Activated T-helper 1 cell treated with anti-CD3 and anti-CD28 coated beads, Interleukin-12 subunit alpha, Interleukin-12 subunit beta, Interleukin-2, Interleukin-4 antibody, amounts not matched to agents 30 ng/mL and 10 ng/mL and 1 ng/mL, durations not matched to agents 14 hours and 24 hours and 36 hours (primary cell): ENCODE measurements at regions of chr10 and their contacts with region 1.

Region 1: DNA sequence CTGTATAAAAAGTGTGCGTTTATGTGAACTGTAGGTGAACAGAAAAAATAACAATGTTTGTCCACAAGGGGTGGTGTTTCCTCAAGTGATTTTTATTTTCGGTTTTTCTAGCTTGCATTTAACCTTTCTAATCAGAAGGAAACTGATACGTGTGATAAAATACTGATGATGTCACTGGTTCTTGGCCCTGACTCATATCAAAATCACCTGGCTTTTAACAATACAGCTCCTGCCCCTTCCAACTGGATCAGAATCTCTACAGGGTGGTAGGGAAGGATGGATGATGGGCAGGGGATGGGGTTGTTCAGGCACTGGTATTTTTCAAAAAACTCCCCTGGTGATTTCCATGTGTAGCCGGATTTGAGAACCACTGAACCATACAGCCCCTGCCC is 10.9 kb downstream of the NPFFR1 start:
- DNase-seq: no peak
- H3K4me3 Mint-ChIP-seq: peak overlapping the region; percentile 26
- H3K27ac Mint-ChIP-seq: peak overlapping the region; percentile 67
- H3K4me1 Mint-ChIP-seq: peaks cover 26% of the 10 kb centered on the region
- H3K27me3 Mint-ChIP-seq: peaks cover 10% of the 10 kb centered on the region

Region 2: DNA sequence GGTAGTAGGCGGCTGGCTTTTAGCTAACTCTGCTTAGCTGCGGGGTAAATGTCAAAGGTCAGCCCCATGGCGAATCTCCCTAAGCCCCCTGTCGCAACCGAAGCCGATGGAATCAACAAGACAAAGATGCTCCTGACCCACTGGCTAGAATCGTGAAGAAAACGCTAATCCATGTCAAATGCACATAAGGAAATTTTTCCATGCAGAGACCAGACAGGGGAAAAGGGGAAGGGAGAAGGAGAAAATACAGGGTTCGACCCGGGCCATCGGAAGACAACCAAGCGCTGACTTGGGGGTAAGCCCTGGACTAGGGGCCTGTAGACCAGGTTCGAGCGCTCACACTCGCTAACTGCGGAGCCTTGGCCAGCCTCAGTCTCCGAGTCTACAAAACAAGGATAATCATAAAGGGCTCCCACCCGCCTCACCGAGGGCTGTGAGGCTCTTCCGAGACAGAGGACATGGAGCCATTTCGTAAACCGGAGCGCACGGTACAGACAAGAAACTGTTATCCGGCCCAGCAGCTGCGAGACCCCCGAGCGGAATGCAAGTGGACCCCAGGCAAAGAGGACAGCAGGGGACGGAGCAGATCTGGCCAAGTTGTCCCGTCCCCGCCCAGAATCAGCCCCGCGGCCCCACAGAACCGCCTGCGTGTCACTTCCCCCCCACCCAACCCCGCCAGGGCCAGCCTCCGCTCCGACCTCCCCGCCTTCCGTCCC is 103.1 kb before region 1 on chr10:
- intact Hi-C with region 1: loop called (anchors 5 kb)
- DNase-seq: no peak
- H3K4me3 Mint-ChIP-seq: peak overlapping the region; percentile 96
- H3K27ac Mint-ChIP-seq: peak overlapping the region; percentile 83
- H3K4me1 Mint-ChIP-seq: peaks cover 65% of the 10 kb centered on the region
- H3K27me3 Mint-ChIP-seq: no peaks in the 10 kb centered on the region

Region 3: DNA sequence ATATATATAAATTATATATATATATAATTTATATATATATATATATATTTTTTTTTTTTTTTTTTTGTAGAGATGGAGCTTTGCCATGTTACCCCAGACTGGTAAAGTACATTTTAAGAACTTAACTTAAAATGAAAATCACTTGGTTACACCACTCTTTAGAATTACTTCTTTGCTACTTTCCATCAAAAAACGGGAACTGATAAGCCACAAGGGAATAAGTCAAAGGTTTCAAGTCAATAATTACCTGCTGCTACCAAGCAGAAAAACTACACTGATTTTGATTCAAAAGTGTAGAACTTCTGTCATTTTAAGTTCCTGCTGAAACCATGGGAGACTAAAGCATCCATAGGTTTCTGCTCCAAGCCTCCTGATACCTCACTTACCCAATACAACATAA is 51.9 kb before region 1 on chr10:
- intact Hi-C with region 1: loop called (anchors 2 kb)
- DNase-seq: no peak
- H3K4me3 Mint-ChIP-seq: peak overlapping the region; percentile 28
- H3K27ac Mint-ChIP-seq: no peak overlapping the region
- H3K4me1 Mint-ChIP-seq: peaks cover 27% of the 10 kb centered on the region
- H3K27me3 Mint-ChIP-seq: no peaks in the 10 kb centered on the region

Region 4: DNA sequence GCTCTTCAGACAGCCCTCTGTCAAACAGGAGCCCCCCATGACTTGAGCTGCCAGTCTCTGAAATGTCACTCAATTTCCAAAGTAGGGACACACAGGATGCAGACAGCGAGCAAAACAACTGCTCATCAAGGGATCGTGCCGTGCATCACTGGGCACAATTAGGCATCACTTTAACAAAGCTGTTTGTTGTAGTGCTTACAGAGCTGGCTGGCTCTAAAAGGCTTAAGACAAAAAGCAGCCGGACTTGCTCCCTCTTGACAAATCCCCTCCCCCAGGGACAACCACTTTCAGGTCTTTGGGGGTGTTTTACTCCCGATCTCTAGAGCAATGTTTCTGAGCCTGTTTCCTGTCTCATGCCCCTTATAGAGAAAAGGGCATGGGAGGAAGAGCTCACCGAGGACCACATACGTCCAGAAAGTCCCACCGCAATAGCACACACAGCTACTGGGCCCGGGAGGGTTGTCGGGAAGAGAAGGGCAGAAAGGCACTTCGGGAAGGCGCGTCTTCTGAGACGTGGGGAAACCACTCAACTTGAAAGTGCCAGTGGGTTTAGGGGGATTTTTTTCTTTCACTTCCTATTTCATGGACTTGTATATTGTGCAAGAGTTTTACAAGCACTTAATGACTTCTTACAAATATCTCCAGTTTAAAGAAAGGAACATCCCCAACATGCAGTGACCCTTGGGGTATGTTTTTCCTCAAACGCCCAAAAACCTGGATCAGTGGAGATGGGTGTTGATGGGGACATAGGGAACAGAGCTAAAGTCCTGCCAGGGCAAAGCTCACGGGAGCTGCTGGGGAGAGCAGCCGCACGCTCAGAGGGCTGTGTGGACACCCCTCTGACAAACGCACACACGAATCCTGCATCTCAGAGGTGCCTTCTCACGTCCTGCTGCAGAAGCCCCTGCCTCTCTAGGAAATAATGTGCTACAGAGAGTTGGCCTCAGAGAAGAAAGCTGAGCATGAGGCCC is 82.4 kb after region 1 on chr10:
- intact Hi-C with region 1: loop called (anchors 1 kb)
- DNase-seq: peak; percentile 38
- H3K4me3 Mint-ChIP-seq: peak overlapping the region; percentile 74
- H3K27ac Mint-ChIP-seq: peak overlapping the region; percentile 76
- H3K4me1 Mint-ChIP-seq: peaks cover 62% of the 10 kb centered on the region
- H3K27me3 Mint-ChIP-seq: peaks cover 3% of the 10 kb centered on the region

Region 5: DNA sequence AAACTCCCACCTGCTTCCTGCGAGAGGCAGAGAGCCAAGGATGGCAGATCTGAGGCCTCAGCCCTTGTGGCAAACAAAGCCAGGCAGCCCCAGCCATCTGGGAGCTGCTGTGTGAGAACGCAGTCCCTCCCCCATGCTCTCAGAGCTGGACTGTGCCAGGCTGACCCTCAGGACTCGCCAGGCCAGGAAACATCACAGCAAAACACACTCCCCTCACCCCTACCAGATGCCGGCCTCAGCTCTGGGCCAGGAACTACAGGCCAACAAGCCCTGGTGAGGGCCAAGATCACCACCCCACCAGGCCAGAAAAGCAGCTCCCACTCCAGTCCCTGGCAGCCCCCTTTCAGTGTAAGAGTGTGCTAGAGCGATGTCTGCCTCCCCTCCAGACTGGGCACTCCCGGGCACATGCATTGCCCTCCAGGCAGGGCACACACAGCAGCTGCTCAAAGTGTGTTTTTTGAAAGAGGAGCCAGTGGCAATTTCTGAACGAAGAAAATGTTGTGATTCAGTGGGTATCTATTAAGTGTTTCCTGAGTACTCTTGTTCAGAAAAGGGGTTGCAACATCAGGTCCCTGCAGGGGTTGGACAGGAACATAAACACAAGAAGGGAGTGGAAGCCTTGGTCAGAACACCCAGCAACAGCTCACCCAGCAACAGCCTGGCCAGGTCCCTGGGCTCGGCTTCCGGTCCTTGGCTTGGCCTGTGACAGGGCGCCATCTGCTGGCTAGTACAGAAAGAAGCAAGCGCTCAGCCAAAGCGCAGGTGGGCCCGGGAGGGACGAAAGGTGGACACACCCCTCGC is 91.2 kb after region 1 on chr10:
- intact Hi-C with region 1: loop called (anchors 2 kb)
- DNase-seq: peak; percentile 81
- H3K4me3 Mint-ChIP-seq: peak overlapping the region; percentile 39
- H3K27ac Mint-ChIP-seq: no peak overlapping the region
- H3K4me1 Mint-ChIP-seq: peaks cover 14% of the 10 kb centered on the region
- H3K27me3 Mint-ChIP-seq: no peaks in the 10 kb centered on the region